CD8-positive, alpha-beta T cell (primary cell): ENCODE measurements at regions of chr1 and their contacts with region 1.

Region 1: DNA sequence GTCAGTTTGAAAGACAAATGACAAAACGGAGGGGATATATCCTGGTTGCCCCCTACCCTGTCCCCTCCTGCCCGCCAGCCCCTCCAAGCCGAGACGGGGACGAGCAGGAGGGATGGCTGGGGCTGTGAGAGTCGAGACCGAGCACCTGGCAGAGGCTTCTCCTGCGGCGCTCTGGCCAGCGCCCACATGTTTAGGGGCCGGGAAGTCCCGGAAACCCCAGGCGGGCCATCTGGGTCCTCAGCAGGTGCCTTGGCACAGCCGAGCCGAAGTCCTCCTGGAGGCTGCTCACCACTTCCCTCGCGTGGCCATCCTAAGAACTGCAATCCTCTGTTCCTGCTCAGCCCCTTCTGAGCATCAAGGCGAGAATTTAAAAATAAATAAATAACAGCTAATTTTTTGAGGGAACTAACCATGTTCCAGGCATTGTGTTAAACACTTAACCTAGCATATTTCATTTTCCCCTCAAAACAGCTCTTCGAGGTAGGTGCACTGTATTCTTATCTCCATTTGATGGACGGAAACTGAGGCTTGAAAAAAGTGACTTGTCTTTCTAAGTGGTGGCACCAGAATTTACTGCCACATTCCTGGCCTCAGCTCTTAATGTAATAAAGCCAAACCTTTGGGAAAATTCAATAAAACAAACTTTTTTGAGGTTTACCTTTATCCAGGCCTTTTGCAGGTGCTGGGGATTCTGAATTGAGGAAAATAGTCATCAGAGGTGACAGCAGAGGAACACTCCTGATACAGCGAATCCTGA is 3.5 kb upstream of the RIMS3 start:
- DNase-seq: peak; percentile 71 to 88 (median 86)
- ATAC-seq: peak; percentile 78
- H3K4me3 ChIP-seq: peak overlapping the region; percentile 37 to 46
- H3K4me3 Mint-ChIP-seq: peak overlapping the region; percentile 37
- H3K27ac ChIP-seq: no peak overlapping the region
- H3K27ac Mint-ChIP-seq: no peak overlapping the region
- H3K4me1 ChIP-seq: peaks cover 15% of the 10 kb centered on the region
- H3K4me1 Mint-ChIP-seq: peaks cover 13% of the 10 kb centered on the region
- H3K27me3 ChIP-seq: no peaks in the 10 kb centered on the region
- H3K27me3 Mint-ChIP-seq: no peaks in the 10 kb centered on the region
- CTCF ChIP-seq: peak; percentile 90

Region 2: GRCh38 chr1:40153073-40153770 is 515.7 kb before region 1 on chr1:
- CTCF ChIA-PET with region 1: no interaction called
- POLR2A ChIA-PET with region 1: no interaction called
- intact Hi-C with region 1: loop called in 1 of 2 experiments (anchors 5 kb)
- DNase-seq: peak in 5 of 9 experiments; percentile 5 to 84 (median 37)
- ATAC-seq: peak; percentile 88
- H3K4me3 ChIP-seq: no peak overlapping the region
- H3K4me3 Mint-ChIP-seq: peak overlapping the region; percentile 20
- H3K27ac ChIP-seq: no peak overlapping the region
- H3K27ac Mint-ChIP-seq: peak overlapping the region; percentile 65
- H3K4me1 ChIP-seq: no peaks in the 10 kb centered on the region
- H3K4me1 Mint-ChIP-seq: peaks cover 9% of the 10 kb centered on the region
- H3K27me3 ChIP-seq: no peaks in the 10 kb centered on the region
- H3K27me3 Mint-ChIP-seq: no peaks in the 10 kb centered on the region
- CTCF ChIP-seq: peak; percentile 76

Region 3: GRCh38 chr1:40302971-40303771 is 365.8 kb before region 1 on chr1:
- CTCF ChIA-PET with region 1: no interaction called
- POLR2A ChIA-PET with region 1: no interaction called
- intact Hi-C with region 1: no loop called
- DNase-seq: no peak
- ATAC-seq: no peak
- H3K4me3 ChIP-seq: no peak overlapping the region
- H3K4me3 Mint-ChIP-seq: no peak overlapping the region
- H3K27ac ChIP-seq: no peak overlapping the region
- H3K27ac Mint-ChIP-seq: no peak overlapping the region
- H3K4me1 ChIP-seq: no peaks in the 10 kb centered on the region
- H3K4me1 Mint-ChIP-seq: no peaks in the 10 kb centered on the region
- H3K27me3 ChIP-seq: no peaks in the 10 kb centered on the region
- H3K27me3 Mint-ChIP-seq: no peaks in the 10 kb centered on the region
- CTCF ChIP-seq: no peak

Region 4: GRCh38 chr1:40411294-40411693 is 257.7 kb before region 1 on chr1:
- CTCF ChIA-PET with region 1: no interaction called
- POLR2A ChIA-PET with region 1: no interaction called
- intact Hi-C with region 1: no loop called
- DNase-seq: peak in 1 of 9 experiments; percentile 39
- ATAC-seq: no peak
- H3K4me3 ChIP-seq: no peak overlapping the region
- H3K4me3 Mint-ChIP-seq: no peak overlapping the region
- H3K27ac ChIP-seq: peak overlapping the region in 1 of 2 experiments; percentile 25
- H3K27ac Mint-ChIP-seq: peak overlapping the region; percentile 60
- H3K4me1 ChIP-seq: peaks cover 34% of the 10 kb centered on the region
- H3K4me1 Mint-ChIP-seq: peaks cover 54% of the 10 kb centered on the region
- H3K27me3 ChIP-seq: no peaks in the 10 kb centered on the region
- H3K27me3 Mint-ChIP-seq: no peaks in the 10 kb centered on the region
- CTCF ChIP-seq: no peak

Region 5: GRCh38 chr1:40612345-40612831 is 56.6 kb before region 1 on chr1:
- CTCF ChIA-PET with region 1: interaction called, 26 read pairs
- POLR2A ChIA-PET with region 1: no interaction called
- intact Hi-C with region 1: loop called (anchors 1 kb)
- DNase-seq: peak; percentile 44 to 80 (median 68)
- ATAC-seq: peak; percentile 95
- H3K4me3 ChIP-seq: no peak overlapping the region
- H3K4me3 Mint-ChIP-seq: no peak overlapping the region
- H3K27ac ChIP-seq: no peak overlapping the region
- H3K27ac Mint-ChIP-seq: no peak overlapping the region
- H3K4me1 ChIP-seq: no peaks in the 10 kb centered on the region
- H3K4me1 Mint-ChIP-seq: no peaks in the 10 kb centered on the region
- H3K27me3 ChIP-seq: no peaks in the 10 kb centered on the region
- H3K27me3 Mint-ChIP-seq: no peaks in the 10 kb centered on the region
- CTCF ChIP-seq: peak; percentile 82

Region 6: DNA sequence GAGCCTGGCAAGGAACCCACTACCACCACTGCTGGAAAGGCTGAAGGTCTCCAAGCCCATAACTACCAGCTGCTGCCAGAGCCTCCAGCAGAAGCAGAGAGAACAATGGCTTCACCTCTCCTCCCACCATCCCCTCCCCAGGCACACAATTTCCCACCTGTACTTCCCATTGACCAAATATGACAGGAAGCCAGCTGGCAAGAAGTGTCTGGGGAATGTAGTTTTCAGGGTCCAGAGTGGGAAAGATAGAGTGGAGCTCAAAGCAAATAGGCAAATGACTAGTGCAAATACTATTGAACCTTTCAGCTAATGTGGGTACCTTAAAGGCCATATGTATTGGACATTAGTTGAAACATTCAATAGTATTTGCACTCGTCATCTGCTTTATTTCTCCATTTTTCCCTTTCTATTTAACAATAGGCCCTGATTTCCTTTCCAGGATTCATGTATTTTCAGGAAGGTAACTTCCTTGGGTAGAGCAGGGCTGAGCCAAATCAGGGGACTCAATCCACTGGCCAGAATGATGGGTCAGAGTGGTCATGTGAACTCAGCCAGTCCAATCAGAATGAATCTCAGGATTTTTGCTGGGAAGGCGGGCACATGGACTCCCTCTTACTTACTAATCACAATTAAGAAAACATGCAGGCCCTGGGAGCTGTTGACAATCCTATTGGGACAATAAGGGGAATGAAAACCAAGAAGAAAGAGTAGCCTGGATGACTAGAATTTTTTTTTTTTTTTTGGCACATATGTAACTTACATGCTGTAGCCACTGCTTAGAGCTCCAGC is 10.4 kb after region 1 on chr1:
- CTCF ChIA-PET with region 1: interaction called, 26 read pairs
- POLR2A ChIA-PET with region 1: interaction called, 3 read pairs
- intact Hi-C with region 1: no loop called
- DNase-seq: no peak
- ATAC-seq: no peak
- H3K4me3 ChIP-seq: no peak overlapping the region
- H3K4me3 Mint-ChIP-seq: no peak overlapping the region
- H3K27ac ChIP-seq: no peak overlapping the region
- H3K27ac Mint-ChIP-seq: no peak overlapping the region
- H3K4me1 ChIP-seq: no peaks in the 10 kb centered on the region
- H3K4me1 Mint-ChIP-seq: no peaks in the 10 kb centered on the region
- H3K27me3 ChIP-seq: no peaks in the 10 kb centered on the region
- H3K27me3 Mint-ChIP-seq: peaks cover 6% of the 10 kb centered on the region
- CTCF ChIP-seq: no peak

Region 7: GRCh38 chr1:40755067-40755466 is 86.1 kb after region 1 on chr1:
- CTCF ChIA-PET with region 1: interaction called, 10 read pairs
- POLR2A ChIA-PET with region 1: no interaction called
- intact Hi-C with region 1: no loop called
- DNase-seq: no peak
- ATAC-seq: no peak
- H3K4me3 ChIP-seq: no peak overlapping the region
- H3K4me3 Mint-ChIP-seq: no peak overlapping the region
- H3K27ac ChIP-seq: no peak overlapping the region
- H3K27ac Mint-ChIP-seq: no peak overlapping the region
- H3K4me1 ChIP-seq: no peaks in the 10 kb centered on the region
- H3K4me1 Mint-ChIP-seq: peaks cover 2% of the 10 kb centered on the region
- H3K27me3 ChIP-seq: no peaks in the 10 kb centered on the region
- H3K27me3 Mint-ChIP-seq: no peaks in the 10 kb centered on the region
- CTCF ChIP-seq: no peak

Region 8: DNA sequence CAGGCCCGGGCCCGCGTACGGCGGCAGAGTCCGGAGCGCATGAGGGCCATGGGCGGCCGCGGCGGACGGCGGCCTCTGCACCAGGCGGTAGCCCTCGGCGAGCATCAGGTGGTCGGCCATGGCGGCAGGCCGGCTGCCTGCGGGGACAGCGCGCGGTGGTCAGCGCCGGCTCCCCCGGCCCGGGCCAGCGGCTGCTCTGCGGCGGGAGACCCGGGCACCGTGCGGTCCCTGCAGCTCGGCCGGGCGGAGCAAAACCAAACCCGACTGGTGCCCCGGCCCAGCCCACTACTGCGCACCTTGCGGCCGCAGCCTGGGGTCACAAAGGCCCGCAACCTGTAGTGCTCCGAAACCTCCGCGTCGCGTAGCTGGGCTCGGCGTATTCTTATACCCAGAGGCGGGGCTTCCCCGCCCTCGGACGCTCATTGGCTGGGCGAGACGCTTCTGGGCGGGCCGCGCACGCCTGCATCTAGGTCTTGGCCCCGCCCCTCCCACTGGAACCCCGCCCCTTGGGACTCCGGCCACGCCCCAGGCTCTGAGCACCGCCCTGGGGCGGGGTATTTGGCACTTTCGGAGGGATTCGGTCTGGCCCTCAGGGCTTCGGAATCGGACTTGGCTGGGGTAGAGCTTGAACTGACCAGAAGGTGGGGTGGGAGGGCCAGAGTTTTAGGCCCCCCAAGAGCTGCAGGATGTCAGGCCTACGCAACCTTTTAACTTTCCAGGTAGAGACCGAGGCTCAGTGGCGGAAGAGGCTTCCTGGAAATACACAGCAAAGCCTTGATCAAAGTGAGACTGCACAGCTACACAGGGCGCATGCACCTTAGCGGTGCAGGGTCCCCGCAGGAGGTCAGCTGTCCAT is 193.3 kb after region 1 on chr1 and contains the start of gene CITED4:
- CTCF ChIA-PET with region 1: no interaction called
- POLR2A ChIA-PET with region 1: interaction called, 3 read pairs
- intact Hi-C with region 1: loop called (anchors 1 kb)
- DNase-seq: peak; percentile 93 to 97 (median 95)
- ATAC-seq: peak; percentile 97
- H3K4me3 ChIP-seq: peak within 1 kb of the TSS; percentile 63 to 78
- H3K4me3 Mint-ChIP-seq: peak within 1 kb of the TSS; percentile 95
- H3K27ac ChIP-seq: peak within 1 kb of the TSS; percentile 67 to 74
- H3K27ac Mint-ChIP-seq: peak within 1 kb of the TSS; percentile 98
- H3K4me1 ChIP-seq: peaks cover 17% of the 10 kb centered on the region
- H3K4me1 Mint-ChIP-seq: peaks cover 14% of the 10 kb centered on the region
- H3K27me3 ChIP-seq: no peaks in the 10 kb centered on the region
- H3K27me3 Mint-ChIP-seq: no peaks in the 10 kb centered on the region
- CTCF ChIP-seq: no peak
- total RNA-seq, gene CITED4: 31.4 to 34.2 TPM